ENCODE measurements at regions of chr9 and their contacts with region 1.

Region 1: DNA sequence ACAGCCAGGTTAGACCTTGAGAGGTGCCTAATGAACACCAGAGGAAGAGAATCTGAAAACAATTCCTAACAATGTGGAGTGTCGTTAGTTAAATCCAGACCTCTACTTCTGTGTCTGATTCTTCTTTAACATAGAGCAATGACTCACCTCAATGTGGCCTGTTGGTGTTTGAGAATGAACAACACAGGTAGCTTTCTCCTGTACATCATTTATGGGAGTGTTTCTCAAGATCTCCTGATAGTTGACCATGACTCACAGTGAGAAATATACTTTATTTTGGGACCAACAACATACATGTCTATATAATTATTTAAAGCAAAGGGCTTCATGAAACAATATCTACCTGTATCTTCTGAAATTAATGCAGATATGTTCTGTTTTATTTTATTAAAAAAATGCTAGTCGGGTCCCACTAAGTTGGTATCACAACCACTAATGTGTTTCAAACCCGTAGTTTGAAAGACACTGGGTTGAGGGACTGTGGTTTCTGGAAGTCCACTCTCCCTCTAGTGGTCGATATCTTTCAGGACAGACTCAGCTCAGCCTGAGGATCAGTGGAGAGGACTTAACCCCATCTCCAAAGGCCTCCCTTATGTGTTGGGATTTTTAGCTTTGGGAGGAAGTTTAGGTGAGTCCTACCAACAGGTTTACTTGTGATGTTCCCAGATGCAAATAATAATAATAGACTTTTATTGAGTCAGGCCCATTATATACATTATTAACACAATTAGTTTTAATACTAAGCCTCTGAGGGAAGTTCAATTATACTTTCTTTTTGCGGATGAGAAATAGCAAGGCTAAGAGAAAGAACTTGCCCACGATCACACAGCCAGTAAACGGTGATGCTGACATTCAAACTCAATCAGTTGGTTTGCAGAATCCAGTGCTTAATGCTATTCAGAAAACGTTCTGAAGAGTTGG is 70.0 kb upstream of the KLF9 start:
- DNase-seq: peak in 1 of 4 donors; percentile 52
- ATAC-seq: peak; percentile 77
- H3K4me3 ChIP-seq: no peak overlapping the region
- H3K27ac ChIP-seq: peak overlapping the region; percentile 54 to 70
- H3K4me1 ChIP-seq: peaks cover 47 to 76% of the 10 kb centered on the region in 2 donors
- H3K27me3 ChIP-seq: no peaks in the 10 kb centered on the region
- CTCF ChIP-seq: peak; percentile 79 to 81

Region 2: DNA sequence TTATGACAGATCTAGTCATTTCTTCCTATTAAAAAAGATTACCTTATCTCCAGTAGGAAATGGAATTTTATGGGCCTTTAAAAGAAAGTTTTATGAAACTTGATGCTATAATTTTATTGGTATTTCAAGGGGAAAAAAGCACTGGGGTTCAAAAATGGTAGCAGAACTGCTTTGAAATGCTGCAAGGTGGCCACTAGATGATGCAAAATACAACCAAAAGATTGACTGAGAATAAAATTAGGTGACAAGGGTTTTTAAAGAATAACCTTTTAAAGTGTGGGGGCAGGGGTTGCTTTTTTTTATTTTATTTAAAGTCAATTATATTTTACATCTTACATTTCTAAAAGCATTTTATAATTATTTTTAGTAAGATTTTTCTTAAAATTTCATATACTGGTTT is 131.7 kb before region 1 on chr9:
- intact Hi-C with region 1: loop called in 1 of 2 experiments (anchors 10 kb)
- DNase-seq: no peak
- ATAC-seq: no peak
- H3K4me3 ChIP-seq: no peak overlapping the region
- H3K27ac ChIP-seq: no peak overlapping the region
- H3K4me1 ChIP-seq: no peaks in the 10 kb centered on the region
- H3K27me3 ChIP-seq: no peaks in the 10 kb centered on the region
- CTCF ChIP-seq: peak; percentile 11 to 56

Region 3: GRCh38 chr9:70419546-70420266 is 64.8 kb before region 1 on chr9:
- intact Hi-C with region 1: loop called in 1 of 2 experiments (anchors 5 kb)
- DNase-seq: peak; percentile 67 to 99 (median 90)
- ATAC-seq: peak; percentile 66
- H3K4me3 ChIP-seq: peak overlapping the region; percentile 30 to 46
- H3K27ac ChIP-seq: peak overlapping the region; percentile 98 to 100
- H3K4me1 ChIP-seq: peaks cover 24 to 69% of the 10 kb centered on the region in 2 donors
- H3K27me3 ChIP-seq: no peaks in the 10 kb centered on the region
- CTCF ChIP-seq: no peak

Region 4: GRCh38 chr9:70602321-70603019 is 118.0 kb after region 1 on chr9:
- intact Hi-C with region 1: loop called in 1 of 2 experiments (anchors 10 kb)
- DNase-seq: peak in 2 of 4 donors; percentile 73 to 84
- ATAC-seq: peak; percentile 88
- H3K4me3 ChIP-seq: peak overlapping the region in 1 of 2 donors; percentile 2
- H3K27ac ChIP-seq: peak overlapping the region; percentile 73 to 83
- H3K4me1 ChIP-seq: peaks cover 10 to 11% of the 10 kb centered on the region in 2 donors
- H3K27me3 ChIP-seq: no peaks in the 10 kb centered on the region
- CTCF ChIP-seq: peak; percentile 72 to 75

Measured in left lung (tissue), 14 donors.